Sigmoid colon (tissue), 7 donors: ENCODE measurements at regions of chr2 and their contacts with region 1.

Region 1: GRCh38 chr2:174112073-174112472 is 136.3 kb downstream of the OLA1 start:
- DNase-seq: no peak
- H3K4me3 ChIP-seq: no peak overlapping the region
- H3K27ac ChIP-seq: no peak overlapping the region
- H3K4me1 ChIP-seq: no peaks in the 10 kb centered on the region
- H3K27me3 ChIP-seq: no peaks in the 10 kb centered on the region
- CTCF ChIP-seq: no peak
- EP300 ChIP-seq: no peak
- POLR2A ChIP-seq: no peak

Region 2: DNA sequence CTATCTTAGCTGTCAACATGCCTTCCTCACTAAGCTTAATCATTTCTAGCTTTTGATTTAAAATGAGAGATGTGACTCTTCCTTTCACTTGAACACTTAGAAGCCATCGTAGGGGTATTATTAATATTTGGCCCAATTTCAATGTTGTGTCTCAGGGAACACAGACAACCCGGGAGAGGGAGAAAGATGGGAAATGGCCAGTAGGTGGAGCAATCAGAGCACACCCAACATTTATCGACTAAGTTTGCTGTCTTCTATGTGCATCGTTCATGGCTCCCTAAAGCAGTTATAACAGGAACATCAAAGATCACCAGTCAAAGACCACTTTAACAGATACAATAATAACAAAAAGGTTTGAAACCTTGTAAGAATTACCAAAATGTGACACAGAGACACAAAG is 26.1 kb after region 1 on chr2:
- intact Hi-C with region 1: loop called (anchors 1 kb)
- DNase-seq: no peak
- H3K4me3 ChIP-seq: no peak overlapping the region
- H3K27ac ChIP-seq: no peak overlapping the region
- H3K4me1 ChIP-seq: no peaks in the 10 kb centered on the region
- H3K27me3 ChIP-seq: no peaks in the 10 kb centered on the region
- CTCF ChIP-seq: no peak
- EP300 ChIP-seq: no peak
- POLR2A ChIP-seq: no peak